ENCODE measurements at regions of chr1 and their contacts with region 1.

Region 1: DNA sequence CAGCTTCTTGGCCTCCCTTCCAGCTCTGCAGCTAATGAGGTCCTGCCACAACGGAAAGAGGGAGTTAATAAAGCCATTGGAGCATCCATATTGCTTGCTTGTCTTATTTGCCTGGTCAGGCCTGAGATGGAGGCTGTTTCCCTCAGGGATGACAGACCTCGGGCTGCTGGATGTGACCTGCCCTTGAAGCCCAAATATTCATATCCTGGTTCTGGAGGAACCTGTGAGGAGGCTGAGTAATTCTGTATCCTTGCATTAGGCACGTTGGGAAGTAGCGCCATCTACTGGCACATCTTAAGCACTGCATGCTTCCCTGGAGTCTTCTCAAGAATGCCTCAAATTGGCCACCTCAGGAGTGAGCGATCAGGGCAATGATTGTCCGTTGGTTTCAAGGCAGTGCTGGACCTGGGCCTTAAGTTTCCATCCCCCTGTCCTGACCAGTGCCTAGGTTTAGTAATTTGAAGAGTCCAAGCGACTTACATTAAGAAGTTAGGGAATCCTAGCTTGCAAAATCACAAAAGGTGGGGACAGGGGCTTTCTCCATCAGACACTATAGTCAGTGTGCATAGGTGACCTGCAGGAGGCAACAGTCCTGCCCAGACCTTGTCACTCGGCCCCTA is 13.8 kb upstream of the NASP start:
- DNase-seq: peak; percentile 77
- ATAC-seq: peak; percentile 99
- H3K4me3 Mint-ChIP-seq: no peak overlapping the region
- H3K27ac Mint-ChIP-seq: no peak overlapping the region
- H3K4me1 Mint-ChIP-seq: no peaks in the 10 kb centered on the region
- H3K27me3 Mint-ChIP-seq: no peaks in the 10 kb centered on the region
- CTCF ChIP-seq: peak; percentile 94

Region 2: GRCh38 chr1:45339789-45340570 is 230.1 kb before region 1 on chr1 and contains the starts of genes MUTYH and TOE1:
- CTCF ChIA-PET with region 1: interaction called, 14 read pairs
- POLR2A ChIA-PET with region 1: interaction called, 4 read pairs
- intact Hi-C with region 1: no loop called
- DNase-seq: peak; percentile 97
- ATAC-seq: peak; percentile 87
- H3K4me3 Mint-ChIP-seq: peak within 1 kb of the TSS; percentile 99
- H3K27ac Mint-ChIP-seq: peak within 1 kb of the TSS; percentile 99
- H3K4me1 Mint-ChIP-seq: peaks cover 37% of the 10 kb centered on the region
- H3K27me3 Mint-ChIP-seq: no peaks in the 10 kb centered on the region
- CTCF ChIP-seq: no peak
- total RNA-seq, gene MUTYH: 51.4 to 54.5 TPM
- total RNA-seq, gene TOE1: 25.7 to 28.1 TPM

Region 3: DNA sequence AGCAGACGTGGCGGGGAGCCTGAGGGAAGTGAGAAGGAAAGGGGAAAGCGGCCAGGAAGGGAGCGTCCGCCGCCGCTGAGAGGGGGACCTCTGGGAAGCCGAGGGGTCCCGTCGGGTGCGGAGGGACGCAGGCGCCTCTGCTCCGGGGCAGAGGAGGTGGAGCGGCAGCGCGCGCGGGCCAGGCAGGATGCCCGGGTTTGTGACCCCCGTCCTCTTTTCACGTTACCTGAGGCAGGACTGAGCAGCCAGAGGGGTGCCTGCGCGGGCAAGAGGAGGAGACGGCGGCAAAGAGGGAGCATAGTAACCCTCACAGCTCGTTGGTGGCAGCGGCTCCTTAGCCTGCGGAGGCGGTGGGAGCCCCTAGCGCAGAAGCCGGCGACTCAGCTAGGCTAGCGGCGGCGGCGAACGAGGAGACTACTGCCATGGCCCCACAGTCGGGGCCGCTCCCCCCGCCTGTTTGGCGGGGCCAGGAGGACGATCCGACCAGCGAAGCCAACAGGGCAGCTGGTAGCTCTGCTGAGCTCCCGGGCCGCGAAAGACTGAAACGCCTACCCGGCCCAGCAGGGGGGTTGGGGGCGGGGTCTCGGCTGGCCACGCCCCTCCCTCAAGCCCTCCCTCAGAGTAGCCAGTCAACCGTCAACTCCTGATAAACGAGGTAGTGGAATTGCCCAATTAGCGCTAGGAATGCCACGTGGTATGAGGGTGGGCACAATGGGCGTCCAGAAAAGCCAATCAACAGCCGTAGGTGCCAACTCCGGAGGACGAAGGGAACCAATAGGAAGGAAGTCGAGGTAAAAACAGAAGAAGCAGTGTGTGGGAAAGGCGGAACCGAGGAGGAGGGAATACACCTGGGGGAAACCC is 79.2 kb before region 1 on chr1 and contains the start of gene TESK2:
- CTCF ChIA-PET with region 1: interaction called, 32 read pairs
- POLR2A ChIA-PET with region 1: interaction called, 6 read pairs
- intact Hi-C with region 1: no loop called
- DNase-seq: peak; percentile 98
- ATAC-seq: peak; percentile 95
- H3K4me3 Mint-ChIP-seq: no peak within 1 kb of the TSS
- H3K27ac Mint-ChIP-seq: no peak within 1 kb of the TSS
- H3K4me1 Mint-ChIP-seq: peaks cover 11% of the 10 kb centered on the region
- H3K27me3 Mint-ChIP-seq: no peaks in the 10 kb centered on the region
- CTCF ChIP-seq: no peak
- total RNA-seq, gene TESK2: 2.9 to 3.7 TPM

Region 4: GRCh38 chr1:45512641-45513054 is 57.4 kb before region 1 on chr1:
- CTCF ChIA-PET with region 1: interaction called, 135 read pairs
- POLR2A ChIA-PET with region 1: interaction called, 24 read pairs
- intact Hi-C with region 1: loop called (anchors 2 kb)
- DNase-seq: peak; percentile 83
- ATAC-seq: peak; percentile 87
- H3K4me3 Mint-ChIP-seq: no peak overlapping the region
- H3K27ac Mint-ChIP-seq: peak overlapping the region; percentile 45
- H3K4me1 Mint-ChIP-seq: peaks cover 19% of the 10 kb centered on the region
- H3K27me3 Mint-ChIP-seq: no peaks in the 10 kb centered on the region
- CTCF ChIP-seq: peak; percentile 76

Region 5: DNA sequence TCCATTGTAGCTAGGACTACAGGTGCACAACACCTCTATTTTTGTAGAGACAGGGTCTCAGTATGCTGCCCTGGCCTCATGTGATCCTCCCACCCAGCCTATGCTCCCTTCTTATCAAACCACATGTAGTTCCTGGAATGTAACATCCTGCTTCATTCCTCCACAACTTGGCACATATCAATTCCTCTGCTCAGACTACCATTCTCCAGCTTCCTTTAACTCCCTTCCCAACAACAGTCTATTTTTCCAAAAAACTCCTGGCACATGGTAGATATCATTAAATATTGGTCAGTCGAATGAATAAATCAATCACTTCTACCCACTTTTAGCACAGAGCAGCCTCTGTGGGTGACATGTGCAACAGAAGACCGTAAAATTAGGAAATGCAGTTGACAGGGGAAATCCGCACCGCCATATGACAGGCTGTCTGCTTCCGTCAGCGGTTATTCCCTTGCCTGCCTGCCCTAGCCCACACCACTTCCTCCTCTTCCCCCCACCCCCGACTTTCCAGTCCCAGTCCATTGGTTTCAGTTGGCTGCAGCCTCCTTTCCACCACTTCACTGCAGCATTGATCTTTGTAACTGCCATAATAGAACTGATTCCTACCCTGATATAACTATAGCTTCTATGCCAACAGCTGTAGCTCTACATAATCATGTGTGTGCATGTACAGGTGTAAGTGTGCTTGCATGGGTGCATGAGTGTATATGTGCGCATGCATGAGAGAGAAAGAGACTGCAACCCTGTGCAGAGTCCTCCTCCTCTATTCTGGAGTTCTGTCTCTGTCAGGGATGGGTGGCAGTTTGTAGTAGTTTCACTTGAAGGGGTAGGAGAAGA is 26.3 kb before region 1 on chr1:
- CTCF ChIA-PET with region 1: interaction called, 23 read pairs
- POLR2A ChIA-PET with region 1: interaction called, 11 read pairs
- intact Hi-C with region 1: no loop called
- DNase-seq: peak; percentile 83
- ATAC-seq: peak; percentile 90
- H3K4me3 Mint-ChIP-seq: peak overlapping the region; percentile 22
- H3K27ac Mint-ChIP-seq: peak overlapping the region; percentile 73
- H3K4me1 Mint-ChIP-seq: peaks cover 35% of the 10 kb centered on the region
- H3K27me3 Mint-ChIP-seq: peaks cover 1% of the 10 kb centered on the region
- CTCF ChIP-seq: no peak

Region 6: GRCh38 chr1:45557422-45557944 is 12.6 kb before region 1 on chr1:
- CTCF ChIA-PET with region 1: interaction called, 22 read pairs
- POLR2A ChIA-PET with region 1: interaction called, 7 read pairs
- intact Hi-C with region 1: no loop called
- DNase-seq: no peak
- ATAC-seq: no peak
- H3K4me3 Mint-ChIP-seq: no peak overlapping the region
- H3K27ac Mint-ChIP-seq: peak overlapping the region; percentile 71
- H3K4me1 Mint-ChIP-seq: peaks cover 30% of the 10 kb centered on the region
- H3K27me3 Mint-ChIP-seq: no peaks in the 10 kb centered on the region
- CTCF ChIP-seq: no peak

Region 7: DNA sequence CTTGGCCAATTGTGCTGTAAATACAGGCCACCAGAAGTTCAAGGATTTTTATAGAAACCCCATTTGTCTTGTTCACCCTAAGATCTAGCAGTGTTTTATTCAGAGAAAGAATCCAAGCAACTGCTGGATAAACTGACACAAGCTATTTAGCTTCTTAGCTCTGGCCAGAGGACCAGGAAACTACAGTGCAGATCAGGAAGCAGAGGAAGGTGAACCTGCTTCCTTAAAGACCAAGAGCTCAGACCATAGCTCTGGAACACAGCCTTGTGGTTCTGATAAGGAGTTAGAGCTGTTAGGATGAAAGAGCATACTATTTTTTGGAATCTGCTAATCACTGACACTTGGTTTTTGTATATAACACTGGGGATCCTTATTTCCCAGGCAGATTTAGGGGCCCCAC is 59.0 kb after region 1 on chr1:
- CTCF ChIA-PET with region 1: no interaction called
- POLR2A ChIA-PET with region 1: no interaction called
- intact Hi-C with region 1: no loop called
- DNase-seq: no peak
- ATAC-seq: no peak
- H3K4me3 Mint-ChIP-seq: no peak overlapping the region
- H3K27ac Mint-ChIP-seq: no peak overlapping the region
- H3K4me1 Mint-ChIP-seq: no peaks in the 10 kb centered on the region
- H3K27me3 Mint-ChIP-seq: no peaks in the 10 kb centered on the region
- CTCF ChIP-seq: no peak